ENCODE measurements at regions of chr4 and their contacts with region 1.

Region 1: GRCh38 chr4:112938461-112939058 is 110.9 kb upstream of the ANK2 start:
- DNase-seq: no peak
- H3K4me3 ChIP-seq: no peak overlapping the region
- H3K27ac ChIP-seq: no peak overlapping the region
- H3K4me1 ChIP-seq: peaks cover 0 to 5% (median 0%) of the 10 kb centered on the region in 4 donors
- H3K27me3 ChIP-seq: no peaks in the 10 kb centered on the region
- CTCF ChIP-seq: peak; percentile 70 to 83 (median 77)
- EP300 ChIP-seq: no peak
- POLR2A ChIP-seq: no peak

Region 2: GRCh38 chr4:112636688-112637551 is 301.6 kb before region 1 on chr4 and contains the starts of genes LARP7 and ZGRF1:
- intact Hi-C with region 1: loop called (anchors 5 kb)
- DNase-seq: peak; percentile 99
- H3K4me3 ChIP-seq: peak within 1 kb of the TSS; percentile 53 to 72 (median 62)
- H3K27ac ChIP-seq: peak within 1 kb of the TSS; percentile 88 to 95 (median 90)
- H3K4me1 ChIP-seq: peaks cover 30 to 41% (median 31%) of the 10 kb centered on the region in 4 donors
- H3K27me3 ChIP-seq: no peaks in the 10 kb centered on the region
- CTCF ChIP-seq: peak; percentile 95 to 99 (median 96)
- EP300 ChIP-seq: no peak
- POLR2A ChIP-seq: no peak
- total RNA-seq, gene LARP7: 42.3 to 75.6 (median 47.3) TPM
- total RNA-seq, gene ZGRF1: 1.5 to 10.0 (median 3.7) TPM

Region 3: GRCh38 chr4:112765317-112765975 is 173.1 kb before region 1 on chr4:
- intact Hi-C with region 1: loop called (anchors 5 kb)
- DNase-seq: no peak
- H3K4me3 ChIP-seq: no peak overlapping the region
- H3K27ac ChIP-seq: no peak overlapping the region
- H3K4me1 ChIP-seq: peaks cover 0 to 9% (median 0%) of the 10 kb centered on the region in 4 donors
- H3K27me3 ChIP-seq: no peaks in the 10 kb centered on the region
- CTCF ChIP-seq: peak; percentile 27 to 49 (median 37)
- EP300 ChIP-seq: no peak
- POLR2A ChIP-seq: no peak

Region 4: DNA sequence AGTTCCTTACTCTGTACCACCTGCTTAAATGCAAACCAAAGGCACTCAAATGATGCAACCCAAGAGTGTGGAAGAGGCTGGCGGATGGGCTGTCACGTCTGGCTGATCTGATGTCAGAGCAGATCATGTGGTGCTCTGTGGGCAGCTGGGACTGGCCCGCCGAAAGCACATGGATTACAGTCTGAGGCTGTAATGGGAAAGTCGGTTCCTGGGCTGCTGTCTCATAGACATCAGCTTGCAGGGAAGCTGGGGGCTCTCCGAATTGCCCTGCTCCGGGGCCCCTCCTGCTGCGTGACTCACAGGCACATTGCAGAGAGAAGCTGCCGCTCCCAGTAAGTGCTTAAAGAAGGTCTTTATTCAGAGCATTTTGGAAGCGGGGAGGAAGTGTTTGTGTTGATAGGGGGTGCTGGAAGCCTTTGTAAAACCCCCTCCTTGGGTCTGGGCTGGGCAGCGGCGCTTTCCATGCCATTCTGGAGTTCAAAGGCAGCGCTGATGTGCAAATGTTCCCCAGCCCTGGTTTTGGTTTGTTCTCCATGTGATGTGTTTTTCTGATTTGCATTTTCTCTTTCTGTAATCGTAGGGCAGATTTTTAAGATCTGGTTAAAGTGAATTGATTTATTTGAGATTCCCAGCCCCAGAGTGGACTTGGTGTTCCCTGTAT is 120.5 kb before region 1 on chr4:
- intact Hi-C with region 1: loop called (anchors 5 kb)
- DNase-seq: peak; percentile 92
- H3K4me3 ChIP-seq: peak overlapping the region; percentile 58 to 70 (median 62)
- H3K27ac ChIP-seq: peak overlapping the region; percentile 66 to 83 (median 73)
- H3K4me1 ChIP-seq: peaks cover 0 to 20% (median 15%) of the 10 kb centered on the region in 4 donors
- H3K27me3 ChIP-seq: no peaks in the 10 kb centered on the region
- CTCF ChIP-seq: no peak
- EP300 ChIP-seq: no peak
- POLR2A ChIP-seq: no peak

Region 5: DNA sequence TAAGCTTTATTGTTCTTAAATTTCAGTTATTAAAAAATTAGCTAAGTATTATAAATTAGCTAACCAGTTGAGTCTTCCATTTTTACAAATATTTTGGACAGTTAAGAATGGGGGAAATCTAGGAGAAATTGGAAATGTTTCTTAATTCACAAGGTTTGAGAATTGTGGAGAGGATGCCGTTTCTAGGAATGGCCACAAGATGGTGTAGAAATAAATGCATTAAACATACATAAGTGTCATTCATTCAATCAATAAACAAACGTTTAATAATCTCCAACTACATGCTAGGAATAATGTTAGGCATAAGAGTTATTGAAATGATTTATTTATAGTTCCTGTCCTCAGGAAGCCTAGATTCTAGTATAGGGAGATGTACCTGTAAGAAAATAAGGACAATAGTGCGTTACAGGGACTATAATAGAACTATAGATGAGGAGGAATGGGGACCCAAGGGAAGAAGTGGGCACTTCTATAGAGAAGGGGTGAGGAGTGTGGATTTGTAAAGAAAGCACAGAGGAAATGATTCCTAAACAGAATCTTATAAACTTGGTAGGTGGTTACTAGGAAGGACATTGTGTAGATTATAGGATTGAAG is 84.8 kb before region 1 on chr4:
- intact Hi-C with region 1: loop called (anchors 10 kb)
- DNase-seq: no peak
- H3K4me3 ChIP-seq: no peak overlapping the region
- H3K27ac ChIP-seq: peak overlapping the region in 2 of 4 donors; percentile 18 to 47
- H3K4me1 ChIP-seq: peaks cover 21 to 34% (median 25%) of the 10 kb centered on the region in 4 donors
- H3K27me3 ChIP-seq: no peaks in the 10 kb centered on the region
- CTCF ChIP-seq: peak; percentile 29 to 43 (median 30)
- EP300 ChIP-seq: no peak
- POLR2A ChIP-seq: no peak

Region 6: DNA sequence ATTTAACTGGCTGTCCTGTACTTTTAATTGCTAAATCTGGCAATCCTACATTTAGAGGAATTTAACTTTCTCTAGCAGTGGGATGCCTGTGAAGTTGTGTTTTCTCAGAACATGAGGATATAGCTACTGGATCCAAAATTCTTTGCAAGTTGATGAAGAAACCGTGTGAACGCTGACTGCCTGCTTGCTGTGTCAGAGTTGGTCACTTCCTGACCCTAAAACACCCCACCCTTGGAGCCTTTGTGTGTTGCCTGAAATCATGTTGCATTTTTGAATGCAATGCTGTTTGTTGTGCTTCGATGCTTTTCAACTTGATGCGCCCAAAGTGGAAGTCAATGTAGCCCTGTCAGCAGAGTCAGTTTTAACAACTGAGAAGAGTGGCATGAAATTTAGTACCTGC is 322.1 kb after region 1 on chr4:
- intact Hi-C with region 1: no loop called
- DNase-seq: no peak
- H3K4me3 ChIP-seq: no peak overlapping the region
- H3K27ac ChIP-seq: no peak overlapping the region
- H3K4me1 ChIP-seq: no peaks in the 10 kb centered on the region
- H3K27me3 ChIP-seq: no peaks in the 10 kb centered on the region
- CTCF ChIP-seq: no peak
- EP300 ChIP-seq: no peak
- POLR2A ChIP-seq: no peak

Measured in esophagus muscularis mucosa (tissue), 4 donors.